Caco-2 (cell line): ENCODE measurements at regions of chr13 and their contacts with region 1.

Region 1: GRCh38 chr13:100514788-100515409 is 73.7 kb downstream of the GGACT start:
- DNase-seq: peak; percentile 76 to 82
- H3K4me3 ChIP-seq: no peak overlapping the region
- H3K4me3 Mint-ChIP-seq: no peak overlapping the region
- H3K27ac Mint-ChIP-seq: no peak overlapping the region
- H3K4me1 ChIP-seq: peaks cover 12% of the 10 kb centered on the region; the same call in 1 of the 2 replicates
- H3K4me1 Mint-ChIP-seq: peaks cover 7% of the 10 kb centered on the region
- H3K27me3 ChIP-seq: no peaks in the 10 kb centered on the region
- H3K27me3 Mint-ChIP-seq: no peaks in the 10 kb centered on the region
- CTCF ChIP-seq: peak; percentile 92 to 96

Region 2: DNA sequence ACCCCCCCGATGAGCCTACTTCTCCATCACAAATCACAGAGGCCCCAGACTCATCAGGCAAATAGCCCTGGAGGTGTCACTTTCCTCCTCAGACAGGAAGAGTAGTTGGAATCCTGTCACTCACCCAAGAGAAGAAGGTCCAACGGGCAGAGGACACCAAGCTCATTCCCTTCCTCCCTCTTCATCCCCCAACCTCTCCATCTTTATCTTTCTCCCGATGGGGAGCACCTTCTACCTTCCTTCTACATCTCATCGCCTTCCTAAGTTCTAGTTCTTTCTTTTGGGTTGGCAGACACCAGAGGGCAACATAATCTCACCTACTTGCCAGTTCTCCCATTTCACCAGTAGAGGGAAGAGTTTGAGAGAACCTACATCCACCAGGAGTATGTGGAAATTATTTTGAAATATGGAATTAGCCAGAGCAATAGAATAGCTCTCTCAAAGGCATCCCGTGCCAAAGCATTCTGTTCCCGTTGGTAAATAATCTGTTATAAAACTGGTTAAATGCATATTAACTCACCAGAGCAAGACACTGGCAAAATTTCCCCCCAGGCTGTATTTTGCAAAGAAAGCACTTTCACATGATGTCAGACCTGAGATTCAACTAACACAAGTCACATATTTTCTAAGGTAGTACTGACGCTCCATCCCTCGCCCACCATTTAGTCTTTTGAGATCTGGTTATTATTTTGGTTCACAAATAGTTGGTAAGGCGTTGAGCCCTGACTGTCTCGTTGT is 598.4 kb before region 1 on chr13:
- CTCF ChIA-PET with region 1: interaction called, 3 read pairs
- POLR2A ChIA-PET with region 1: no interaction called
- intact Hi-C with region 1: loop called (anchors 1 kb)
- DNase-seq: peak in 1 of 2 experiments; percentile 65
- H3K4me3 ChIP-seq: no peak overlapping the region
- H3K4me3 Mint-ChIP-seq: no peak overlapping the region
- H3K27ac Mint-ChIP-seq: no peak overlapping the region
- H3K4me1 ChIP-seq: no peaks in the 10 kb centered on the region
- H3K4me1 Mint-ChIP-seq: no peaks in the 10 kb centered on the region
- H3K27me3 ChIP-seq: no peaks in the 10 kb centered on the region
- H3K27me3 Mint-ChIP-seq: peaks cover 12% of the 10 kb centered on the region
- CTCF ChIP-seq: peak; percentile 93 to 99

Region 3: DNA sequence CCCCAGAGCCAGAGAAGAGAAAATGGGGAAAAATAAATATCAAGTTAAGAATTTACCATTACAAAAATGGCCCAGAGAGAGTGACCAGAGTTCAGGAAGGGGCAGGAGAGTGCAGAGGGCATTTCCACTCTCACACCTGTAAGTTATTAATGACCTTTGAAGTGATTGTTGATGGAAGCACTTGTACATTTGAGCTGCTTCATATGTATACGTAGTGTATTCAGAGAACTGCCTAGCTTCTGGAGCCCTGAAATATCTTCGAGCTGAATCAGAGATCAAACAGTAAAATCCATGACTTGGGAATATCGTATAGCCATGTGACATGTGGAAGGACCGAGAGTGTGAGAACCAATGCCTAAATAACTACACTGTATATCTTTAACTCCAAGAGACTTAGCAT is 475.2 kb before region 1 on chr13:
- CTCF ChIA-PET with region 1: no interaction called
- POLR2A ChIA-PET with region 1: no interaction called
- intact Hi-C with region 1: loop called (anchors 5 kb)
- DNase-seq: no peak
- H3K4me3 ChIP-seq: no peak overlapping the region
- H3K4me3 Mint-ChIP-seq: peak overlapping the region; percentile 15
- H3K27ac Mint-ChIP-seq: no peak overlapping the region
- H3K4me1 ChIP-seq: peaks cover 8% of the 10 kb centered on the region
- H3K4me1 Mint-ChIP-seq: peaks cover 14% of the 10 kb centered on the region
- H3K27me3 ChIP-seq: no peaks in the 10 kb centered on the region
- H3K27me3 Mint-ChIP-seq: no peaks in the 10 kb centered on the region
- CTCF ChIP-seq: no peak

Region 4: DNA sequence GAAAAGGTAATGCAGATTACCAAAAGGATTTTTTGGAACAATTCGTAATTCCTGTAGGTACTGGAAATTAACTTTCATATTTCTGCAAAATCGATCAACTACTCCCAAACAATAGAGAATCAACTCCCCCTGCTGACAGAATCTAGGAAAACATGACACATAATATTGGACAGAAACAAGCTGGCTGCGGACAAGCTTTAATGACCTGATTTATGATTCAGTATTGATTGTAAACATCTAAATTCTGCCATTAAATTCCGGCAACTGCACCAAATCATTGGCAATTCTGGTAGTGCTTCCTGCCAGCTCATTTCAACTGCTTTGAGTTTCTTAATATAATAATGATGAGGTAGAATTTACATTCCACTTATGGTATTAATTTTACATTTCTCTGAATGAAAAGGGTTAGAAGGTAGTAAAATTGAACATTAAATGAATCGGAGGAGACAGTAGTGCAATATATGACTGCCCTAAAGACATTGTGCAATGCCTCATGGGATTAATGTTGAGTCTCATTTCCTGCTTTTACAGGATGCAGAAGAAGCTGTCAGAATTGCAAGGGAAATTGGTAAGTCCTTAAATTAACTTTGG is 279.5 kb before region 1 on chr13:
- CTCF ChIA-PET with region 1: interaction called, 6 read pairs
- POLR2A ChIA-PET with region 1: no interaction called
- intact Hi-C with region 1: loop called (anchors 2 kb)
- DNase-seq: peak in 1 of 2 experiments; percentile 69
- H3K4me3 ChIP-seq: no peak overlapping the region
- H3K4me3 Mint-ChIP-seq: no peak overlapping the region
- H3K27ac Mint-ChIP-seq: no peak overlapping the region
- H3K4me1 ChIP-seq: peaks cover 19% of the 10 kb centered on the region
- H3K4me1 Mint-ChIP-seq: peaks cover 10% of the 10 kb centered on the region
- H3K27me3 ChIP-seq: no peaks in the 10 kb centered on the region
- H3K27me3 Mint-ChIP-seq: no peaks in the 10 kb centered on the region
- CTCF ChIP-seq: peak; percentile 67 to 69

Region 5: DNA sequence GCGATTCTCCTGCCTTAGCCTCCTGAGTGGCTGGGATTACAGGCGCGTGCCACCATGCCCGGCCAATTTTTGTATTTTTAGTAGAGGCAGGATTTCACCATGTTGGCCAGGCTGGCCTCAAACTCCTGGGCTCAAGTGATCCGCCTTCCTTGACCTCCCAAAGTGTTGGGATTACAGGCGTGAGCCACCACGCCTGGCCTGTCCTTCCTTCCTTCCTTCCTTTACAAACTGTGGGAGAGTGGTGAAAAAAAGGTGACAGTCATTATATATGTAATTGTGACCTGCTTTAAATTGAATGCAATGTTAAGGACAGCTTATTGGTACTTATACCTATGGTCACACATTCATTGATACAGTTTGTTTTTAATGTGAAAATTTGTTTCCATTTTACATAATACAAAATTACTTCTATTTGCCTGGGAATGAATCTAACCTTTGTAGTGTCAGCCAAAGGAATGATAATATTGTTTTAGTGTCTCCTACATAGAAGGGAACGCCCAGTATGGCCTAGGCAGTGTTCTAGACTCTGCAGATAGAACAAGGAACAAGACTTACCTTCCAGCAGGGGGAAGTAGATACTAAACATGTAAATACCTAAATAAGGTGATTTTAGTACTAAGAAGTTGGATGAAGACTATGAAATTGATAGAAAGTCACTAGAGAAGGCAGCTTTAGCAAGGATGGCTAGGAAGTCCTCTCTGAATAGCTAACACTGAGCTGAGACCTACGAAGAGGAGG is 72.6 kb before region 1 on chr13:
- CTCF ChIA-PET with region 1: no interaction called
- POLR2A ChIA-PET with region 1: no interaction called
- intact Hi-C with region 1: loop called (anchors 1 kb)
- DNase-seq: no peak
- H3K4me3 ChIP-seq: no peak overlapping the region
- H3K4me3 Mint-ChIP-seq: no peak overlapping the region
- H3K27ac Mint-ChIP-seq: peak overlapping the region; percentile 36
- H3K4me1 ChIP-seq: peaks cover 8% of the 10 kb centered on the region; the same call in 1 of the 2 replicates
- H3K4me1 Mint-ChIP-seq: no peaks in the 10 kb centered on the region
- H3K27me3 ChIP-seq: no peaks in the 10 kb centered on the region
- H3K27me3 Mint-ChIP-seq: no peaks in the 10 kb centered on the region
- CTCF ChIP-seq: no peak

Region 6: DNA sequence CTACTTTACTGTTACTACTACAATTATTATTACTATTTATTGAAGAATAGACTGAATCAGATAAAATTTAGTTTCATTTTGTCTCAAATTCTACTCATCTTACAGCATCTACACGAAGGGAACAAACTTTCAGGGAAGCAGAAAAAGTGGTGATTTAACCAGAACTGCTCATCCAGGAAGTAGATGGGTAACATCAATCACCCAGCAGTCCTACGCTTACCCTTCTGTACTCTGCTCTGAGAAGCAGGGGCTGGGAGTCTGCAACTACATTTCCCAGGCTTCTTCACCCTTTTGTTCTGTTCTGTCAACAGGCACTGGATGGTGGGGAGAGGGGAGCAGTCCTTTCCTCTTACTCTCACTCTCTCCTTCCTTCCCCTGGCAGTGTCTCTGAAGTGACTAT is 105.0 kb after region 1 on chr13:
- CTCF ChIA-PET with region 1: no interaction called
- POLR2A ChIA-PET with region 1: no interaction called
- intact Hi-C with region 1: no loop called
- DNase-seq: no peak
- H3K4me3 ChIP-seq: no peak overlapping the region
- H3K4me3 Mint-ChIP-seq: no peak overlapping the region
- H3K27ac Mint-ChIP-seq: no peak overlapping the region
- H3K4me1 ChIP-seq: no peaks in the 10 kb centered on the region
- H3K4me1 Mint-ChIP-seq: no peaks in the 10 kb centered on the region
- H3K27me3 ChIP-seq: no peaks in the 10 kb centered on the region
- H3K27me3 Mint-ChIP-seq: no peaks in the 10 kb centered on the region
- CTCF ChIP-seq: no peak

Region 7: DNA sequence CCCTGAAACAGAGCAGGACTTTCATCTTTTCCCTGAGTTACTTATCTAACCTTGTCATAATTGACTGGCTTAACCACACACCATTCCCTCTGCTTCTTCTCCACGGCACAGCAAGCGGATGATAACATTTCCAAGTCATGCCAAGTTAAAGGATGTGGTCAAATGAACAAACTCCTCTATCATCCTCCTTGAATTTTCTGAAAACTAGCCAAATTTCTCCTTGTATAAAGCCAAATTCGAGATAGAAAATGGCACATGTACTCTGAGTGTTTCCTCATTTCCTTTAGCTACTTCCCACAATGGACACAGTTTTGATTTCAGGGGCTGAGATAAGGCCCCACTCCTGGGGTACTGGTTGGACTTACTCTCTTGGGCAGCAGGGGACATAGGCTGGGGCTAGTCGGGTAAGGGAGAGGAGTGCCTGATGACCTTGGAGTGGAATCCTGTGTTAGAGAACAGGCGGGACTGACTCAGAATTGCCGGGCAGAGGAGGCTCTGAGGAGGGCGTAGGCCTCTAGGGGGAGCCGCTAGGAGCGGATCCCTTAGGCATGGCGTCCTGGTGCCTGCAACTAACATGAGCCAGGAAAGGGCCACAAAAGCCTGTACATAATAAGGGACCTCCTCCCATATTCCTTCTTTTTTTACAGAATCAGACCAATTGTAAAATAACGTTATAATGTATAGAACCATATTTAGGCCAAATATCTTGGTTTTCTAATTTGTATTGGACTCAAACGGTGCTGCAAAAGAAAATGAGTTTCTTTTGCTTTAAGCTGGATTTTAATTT is 180.0 kb after region 1 on chr13:
- CTCF ChIA-PET with region 1: no interaction called
- POLR2A ChIA-PET with region 1: no interaction called
- intact Hi-C with region 1: no loop called
- DNase-seq: peak in 1 of 2 experiments; percentile 41
- H3K4me3 ChIP-seq: no peak overlapping the region
- H3K4me3 Mint-ChIP-seq: no peak overlapping the region
- H3K27ac Mint-ChIP-seq: no peak overlapping the region
- H3K4me1 ChIP-seq: no peaks in the 10 kb centered on the region
- H3K4me1 Mint-ChIP-seq: no peaks in the 10 kb centered on the region
- H3K27me3 ChIP-seq: no peaks in the 10 kb centered on the region
- H3K27me3 Mint-ChIP-seq: no peaks in the 10 kb centered on the region
- CTCF ChIP-seq: peak in 1 of 2 experiments; percentile 26

Region 8: GRCh38 chr13:101681834-101682233 is 1166.9 kb after region 1 on chr13:
- CTCF ChIA-PET with region 1: no interaction called
- POLR2A ChIA-PET with region 1: no interaction called
- intact Hi-C with region 1: no loop called
- DNase-seq: no peak
- H3K4me3 ChIP-seq: no peak overlapping the region
- H3K4me3 Mint-ChIP-seq: no peak overlapping the region
- H3K27ac Mint-ChIP-seq: no peak overlapping the region
- H3K4me1 ChIP-seq: no peaks in the 10 kb centered on the region
- H3K4me1 Mint-ChIP-seq: no peaks in the 10 kb centered on the region
- H3K27me3 ChIP-seq: no peaks in the 10 kb centered on the region
- H3K27me3 Mint-ChIP-seq: peaks cover 3% of the 10 kb centered on the region
- CTCF ChIP-seq: no peak